Endothelial cell of umbilical vein (primary cell): ENCODE measurements at regions of chr1 and their contacts with region 1.

Region 1: GRCh38 chr1:89085781-89086180 is 20.8 kb upstream of the GBP1 start:
- DNase-seq: peak; percentile 67
- H3K4me3 ChIP-seq: no peak overlapping the region
- H3K27ac ChIP-seq: no peak overlapping the region
- H3K4me1 ChIP-seq: no peaks in the 10 kb centered on the region
- H3K27me3 ChIP-seq: peaks cover 0 to 3% of the 10 kb centered on the region in 2 experiments
- CTCF ChIP-seq: peak in 1 of 2 donors; percentile 74
- POLR2A ChIP-seq: no peak

Region 2: DNA sequence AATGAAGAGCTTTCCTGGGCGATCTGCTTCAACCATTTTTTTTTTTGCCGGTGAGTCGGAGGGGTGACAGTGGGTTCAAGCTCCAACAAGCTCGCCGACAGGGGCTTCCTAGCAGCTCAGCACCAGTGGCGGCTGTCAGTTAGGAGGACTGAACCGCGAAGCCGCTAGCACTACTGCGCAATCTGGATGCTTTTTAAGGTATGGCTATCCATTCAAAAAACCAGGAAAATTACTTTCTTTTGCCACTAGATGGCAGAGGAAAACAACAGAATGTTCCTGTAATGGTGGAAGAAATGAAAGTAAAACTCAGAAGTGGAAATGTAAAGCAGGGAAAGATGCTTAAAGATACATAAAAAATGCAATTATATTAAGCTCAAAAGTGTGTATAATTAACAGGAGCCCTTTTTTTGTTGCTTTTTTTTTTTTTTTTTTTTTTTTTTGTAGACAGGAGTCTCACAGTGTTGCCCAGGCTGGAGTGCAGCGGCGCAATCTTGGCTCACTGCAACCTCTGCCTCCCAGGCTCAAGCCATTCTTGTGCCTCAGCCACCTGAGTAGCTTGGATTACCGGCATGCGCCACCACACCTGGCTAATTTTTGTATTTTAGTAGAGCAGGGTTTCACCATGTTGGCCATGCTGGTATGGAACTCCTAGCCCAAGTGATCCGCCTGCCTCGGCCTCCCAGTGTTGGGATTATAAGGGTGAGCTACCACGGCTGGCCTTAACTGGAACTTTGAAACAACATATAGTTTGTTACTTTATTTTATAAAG is 101.8 kb before region 1 on chr1:
- CTCF ChIA-PET with region 1: interaction called, 21 read pairs
- POLR2A ChIA-PET with region 1: no interaction called
- dilution Hi-C with region 1: no loop called
- intact Hi-C with region 1: no loop called
- DNase-seq: peak; percentile 65
- H3K4me3 ChIP-seq: peak overlapping the region in 1 of 3 experiments; percentile 34
- H3K27ac ChIP-seq: peak overlapping the region; percentile 34
- H3K4me1 ChIP-seq: peaks cover 19% of the 10 kb centered on the region
- H3K27me3 ChIP-seq: no peaks in the 10 kb centered on the region
- CTCF ChIP-seq: peak; percentile 48 to 50
- POLR2A ChIP-seq: no peak

Region 3: DNA sequence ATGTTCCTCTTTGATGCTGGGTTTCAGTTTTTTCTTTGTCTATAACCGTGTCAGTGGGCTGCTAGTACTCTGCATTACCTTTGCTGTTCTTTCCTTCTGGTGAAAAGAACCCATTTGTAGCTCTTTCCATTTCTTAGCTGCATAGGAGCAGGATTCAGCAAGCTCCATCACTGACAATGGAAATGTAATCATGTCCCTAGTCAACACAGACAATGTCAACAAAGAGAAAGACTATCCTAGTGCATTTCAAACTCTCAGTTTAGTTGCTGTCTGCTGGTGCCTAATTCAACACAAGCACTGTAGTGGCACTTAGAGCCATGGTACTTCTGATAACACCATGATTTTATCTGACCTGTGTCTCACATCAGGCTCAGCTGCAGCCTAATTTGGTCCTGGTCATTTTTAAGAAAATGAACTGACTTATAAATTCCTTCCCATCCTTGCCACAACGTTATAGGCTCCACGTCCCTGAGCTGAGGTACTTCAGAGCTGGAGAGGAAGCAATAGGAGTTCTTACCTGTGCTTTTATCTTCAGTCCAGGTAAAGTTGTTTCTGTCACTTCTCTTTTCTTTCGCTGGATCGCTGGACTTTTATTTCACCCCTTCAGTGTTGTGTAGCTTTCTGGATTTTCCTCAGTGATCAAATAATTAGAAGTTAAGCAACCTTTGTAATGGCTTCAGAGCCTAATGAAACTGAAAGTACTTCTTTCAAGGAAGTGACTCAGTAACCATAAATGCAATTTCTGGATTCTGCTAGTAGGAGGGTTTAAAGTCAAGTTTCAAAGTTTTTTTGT is 63.4 kb before region 1 on chr1 and contains the start of gene GBP3:
- CTCF ChIA-PET with region 1: interaction called, 13 read pairs
- POLR2A ChIA-PET with region 1: no interaction called
- dilution Hi-C with region 1: no loop called
- intact Hi-C with region 1: no loop called
- DNase-seq: peak; percentile 76
- H3K4me3 ChIP-seq: peak within 1 kb of the TSS; percentile 59 to 97 (median 87)
- H3K27ac ChIP-seq: peak within 1 kb of the TSS; percentile 74
- H3K4me1 ChIP-seq: peaks cover 11% of the 10 kb centered on the region
- H3K27me3 ChIP-seq: no peaks in the 10 kb centered on the region
- CTCF ChIP-seq: no peak
- POLR2A ChIP-seq: no peak
- total RNA-seq, gene GBP3: 7.3 and 12.7 TPM in 2 replicates

Region 4: DNA sequence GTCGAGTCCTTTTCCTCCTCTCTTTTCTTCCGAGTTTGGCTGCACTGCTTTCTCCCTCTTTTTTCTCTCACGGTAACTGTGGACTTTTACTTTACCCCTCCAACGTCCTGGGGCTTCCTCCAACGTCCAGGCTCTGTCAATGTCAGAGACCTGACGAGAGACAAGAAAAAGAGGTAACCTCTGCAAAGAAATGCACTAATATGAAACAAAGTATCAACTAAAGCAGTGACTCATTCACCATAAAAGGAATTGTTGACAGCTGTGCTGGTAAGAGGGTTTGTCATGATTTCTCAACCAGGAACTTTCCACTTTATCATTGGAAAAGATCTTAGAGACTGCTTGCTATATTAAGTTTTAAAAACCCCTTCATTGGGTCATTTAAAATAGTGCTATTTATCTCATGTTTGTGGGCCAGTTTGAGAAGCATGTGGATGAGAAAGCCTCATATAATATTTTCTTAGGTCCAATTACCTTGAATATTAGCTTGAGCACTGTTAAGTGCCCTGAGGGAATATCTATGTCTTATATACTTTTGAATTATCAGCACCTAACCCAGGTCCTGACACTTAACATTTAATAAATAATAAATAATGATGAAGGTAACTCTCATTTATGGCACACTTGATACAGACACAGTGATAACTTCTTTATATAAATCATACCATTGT is 40.3 kb after region 1 on chr1 and contains the start of gene GBP2:
- CTCF ChIA-PET with region 1: interaction called, 18 read pairs
- POLR2A ChIA-PET with region 1: no interaction called
- dilution Hi-C with region 1: no loop called
- intact Hi-C with region 1: no loop called
- DNase-seq: peak; percentile 85
- H3K4me3 ChIP-seq: peak within 1 kb of the TSS; percentile 46 to 92 (median 89)
- H3K27ac ChIP-seq: peak within 1 kb of the TSS; percentile 65
- H3K4me1 ChIP-seq: peaks cover 30% of the 10 kb centered on the region
- H3K27me3 ChIP-seq: no peaks in the 10 kb centered on the region
- CTCF ChIP-seq: no peak
- POLR2A ChIP-seq: no peak
- total RNA-seq, gene GBP2: 19.4 and 30.2 TPM in 2 replicates

Region 5: GRCh38 chr1:89276690-89277089 is 190.9 kb after region 1 on chr1:
- CTCF ChIA-PET with region 1: interaction called, 12 read pairs
- POLR2A ChIA-PET with region 1: no interaction called
- dilution Hi-C with region 1: no loop called
- intact Hi-C with region 1: no loop called
- DNase-seq: no peak
- H3K4me3 ChIP-seq: no peak overlapping the region
- H3K27ac ChIP-seq: no peak overlapping the region
- H3K4me1 ChIP-seq: no peaks in the 10 kb centered on the region
- H3K27me3 ChIP-seq: no peaks in the 10 kb centered on the region
- CTCF ChIP-seq: no peak
- POLR2A ChIP-seq: no peak

Region 6: GRCh38 chr1:89358287-89358893 is 272.6 kb after region 1 on chr1:
- CTCF ChIA-PET with region 1: interaction called, 127 read pairs
- POLR2A ChIA-PET with region 1: no interaction called
- dilution Hi-C with region 1: no loop called
- intact Hi-C with region 1: loop called (anchors 1 kb)
- DNase-seq: peak; percentile 62
- H3K4me3 ChIP-seq: no peak overlapping the region
- H3K27ac ChIP-seq: no peak overlapping the region
- H3K4me1 ChIP-seq: no peaks in the 10 kb centered on the region
- H3K27me3 ChIP-seq: peaks cover 4 to 10% of the 10 kb centered on the region in 2 experiments
- CTCF ChIP-seq: peak; percentile 63 to 75
- POLR2A ChIP-seq: no peak